ENCODE measurements at regions of chr13 and their contacts with region 1.

Region 1: GRCh38 chr13:76293346-76293745 is 592.9 kb downstream of the KCTD12 start:
- DNase-seq: no peak
- ATAC-seq: no peak
- H3K4me3 ChIP-seq: no peak overlapping the region
- H3K4me3 Mint-ChIP-seq: no peak overlapping the region
- H3K27ac ChIP-seq: no peak overlapping the region
- H3K27ac Mint-ChIP-seq: no peak overlapping the region
- H3K4me1 ChIP-seq: no peaks in the 10 kb centered on the region
- H3K4me1 Mint-ChIP-seq: no peaks in the 10 kb centered on the region
- H3K27me3 ChIP-seq: no peaks in the 10 kb centered on the region
- H3K27me3 Mint-ChIP-seq: no peaks in the 10 kb centered on the region
- CTCF ChIP-seq: no peak

Region 2: GRCh38 chr13:76438050-76438449 is 144.7 kb after region 1 on chr13:
- CTCF ChIA-PET with region 1: no interaction called
- POLR2A ChIA-PET with region 1: no interaction called
- intact Hi-C with region 1: loop called in 1 of 2 experiments (anchors 10 kb)
- DNase-seq: no peak
- ATAC-seq: no peak
- H3K4me3 ChIP-seq: no peak overlapping the region
- H3K4me3 Mint-ChIP-seq: no peak overlapping the region
- H3K27ac ChIP-seq: no peak overlapping the region
- H3K27ac Mint-ChIP-seq: no peak overlapping the region
- H3K4me1 ChIP-seq: no peaks in the 10 kb centered on the region
- H3K4me1 Mint-ChIP-seq: no peaks in the 10 kb centered on the region
- H3K27me3 ChIP-seq: no peaks in the 10 kb centered on the region
- H3K27me3 Mint-ChIP-seq: peaks cover 3% of the 10 kb centered on the region
- CTCF ChIP-seq: no peak

Measured in CD8-positive, alpha-beta T cell (primary cell).